Ovary (tissue), 10 donors: ENCODE measurements at regions of chr12 and their contacts with region 1.

Region 1: DNA sequence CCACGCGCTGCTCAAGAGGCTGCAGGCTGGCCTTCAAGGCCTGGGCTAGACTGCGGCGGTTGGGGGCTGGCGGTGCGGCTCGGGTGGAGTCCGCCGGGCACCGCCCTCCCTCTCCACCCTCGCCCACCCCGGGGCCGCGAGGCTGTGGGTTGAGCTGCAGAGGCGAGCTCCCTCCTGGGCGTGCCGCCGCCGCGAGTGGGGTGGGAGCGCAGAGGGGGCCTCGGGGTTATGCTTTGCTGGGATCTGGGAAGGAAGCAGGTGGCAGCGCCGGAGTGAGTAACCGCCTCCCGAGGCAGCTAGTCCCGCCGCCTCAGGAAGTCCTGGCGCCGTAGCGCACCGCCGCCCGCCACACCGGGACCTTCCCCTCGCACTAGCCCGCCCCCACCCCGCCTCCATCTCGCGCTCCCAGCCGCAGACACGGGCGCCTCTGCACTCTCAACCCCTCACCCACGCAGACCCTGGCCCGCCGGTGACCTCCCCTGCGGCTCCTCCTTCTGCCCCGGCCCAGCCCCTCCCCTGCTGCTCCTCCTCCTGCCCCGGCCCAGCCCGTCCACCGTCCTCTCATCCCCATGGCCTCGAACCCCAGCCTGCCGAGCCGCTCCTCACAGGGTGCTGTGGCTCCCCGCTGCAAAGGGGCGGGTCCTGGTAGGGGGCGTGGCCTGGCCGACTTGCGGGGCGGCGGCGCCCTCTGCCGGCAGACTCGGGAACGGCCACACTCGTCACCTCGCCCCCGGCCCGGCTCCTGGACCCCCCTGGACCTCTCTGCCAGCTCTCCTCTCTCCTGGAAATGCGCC is 16.6 kb downstream of the TAMALIN start:
- DNase-seq: peak; percentile 88 to 94 (median 93)
- H3K4me3 ChIP-seq: peak overlapping the region; percentile 34
- H3K27ac ChIP-seq: peak overlapping the region in 1 of 2 donors; percentile 9
- H3K4me1 ChIP-seq: peaks cover 8% of the 10 kb centered on the region
- H3K27me3 ChIP-seq: no peaks in the 10 kb centered on the region
- CTCF ChIP-seq: peak; percentile 96 to 99 (median 99)
- EP300 ChIP-seq: no peak
- POLR2A ChIP-seq: peak; percentile 11

Region 2: GRCh38 chr12:51984657-51985056 is 38.7 kb before region 1 on chr12:
- intact Hi-C with region 1: no loop called
- DNase-seq: no peak
- H3K4me3 ChIP-seq: no peak overlapping the region
- H3K27ac ChIP-seq: no peak overlapping the region
- H3K4me1 ChIP-seq: no peaks in the 10 kb centered on the region
- H3K27me3 ChIP-seq: no peaks in the 10 kb centered on the region
- CTCF ChIP-seq: no peak
- EP300 ChIP-seq: no peak
- POLR2A ChIP-seq: no peak

Region 3: GRCh38 chr12:52082988-52083637 is 59.7 kb after region 1 on chr12:
- intact Hi-C with region 1: loop called (anchors 1 to 2 kb)
- DNase-seq: peak; percentile 67 to 83 (median 73)
- H3K4me3 ChIP-seq: no peak overlapping the region
- H3K27ac ChIP-seq: peak overlapping the region; percentile 87 to 88
- H3K4me1 ChIP-seq: peaks cover 19% of the 10 kb centered on the region
- H3K27me3 ChIP-seq: no peaks in the 10 kb centered on the region
- CTCF ChIP-seq: peak; percentile 92 to 98 (median 97)
- EP300 ChIP-seq: no peak
- POLR2A ChIP-seq: peak; percentile 26

Region 4: GRCh38 chr12:52213512-52214420 is 190.4 kb after region 1 on chr12:
- intact Hi-C with region 1: no loop called
- DNase-seq: peak; percentile 41 to 78 (median 64)
- H3K4me3 ChIP-seq: no peak overlapping the region
- H3K27ac ChIP-seq: no peak overlapping the region
- H3K4me1 ChIP-seq: peaks cover 2% of the 10 kb centered on the region
- H3K27me3 ChIP-seq: no peaks in the 10 kb centered on the region
- CTCF ChIP-seq: peak; percentile 34 to 76 (median 55)
- EP300 ChIP-seq: no peak
- POLR2A ChIP-seq: no peak